ENCODE measurements at regions of chr17 and their contacts with region 1.

Region 1: GRCh38 chr17:39769974-39770587 is 32.3 kb downstream of the GRB7 start:
- DNase-seq: peak; percentile 86
- H3K4me3 Mint-ChIP-seq: no peak overlapping the region
- H3K27ac Mint-ChIP-seq: peak overlapping the region; percentile 86
- H3K4me1 Mint-ChIP-seq: peaks cover 88% of the 10 kb centered on the region
- H3K27me3 Mint-ChIP-seq: no peaks in the 10 kb centered on the region

Region 2: DNA sequence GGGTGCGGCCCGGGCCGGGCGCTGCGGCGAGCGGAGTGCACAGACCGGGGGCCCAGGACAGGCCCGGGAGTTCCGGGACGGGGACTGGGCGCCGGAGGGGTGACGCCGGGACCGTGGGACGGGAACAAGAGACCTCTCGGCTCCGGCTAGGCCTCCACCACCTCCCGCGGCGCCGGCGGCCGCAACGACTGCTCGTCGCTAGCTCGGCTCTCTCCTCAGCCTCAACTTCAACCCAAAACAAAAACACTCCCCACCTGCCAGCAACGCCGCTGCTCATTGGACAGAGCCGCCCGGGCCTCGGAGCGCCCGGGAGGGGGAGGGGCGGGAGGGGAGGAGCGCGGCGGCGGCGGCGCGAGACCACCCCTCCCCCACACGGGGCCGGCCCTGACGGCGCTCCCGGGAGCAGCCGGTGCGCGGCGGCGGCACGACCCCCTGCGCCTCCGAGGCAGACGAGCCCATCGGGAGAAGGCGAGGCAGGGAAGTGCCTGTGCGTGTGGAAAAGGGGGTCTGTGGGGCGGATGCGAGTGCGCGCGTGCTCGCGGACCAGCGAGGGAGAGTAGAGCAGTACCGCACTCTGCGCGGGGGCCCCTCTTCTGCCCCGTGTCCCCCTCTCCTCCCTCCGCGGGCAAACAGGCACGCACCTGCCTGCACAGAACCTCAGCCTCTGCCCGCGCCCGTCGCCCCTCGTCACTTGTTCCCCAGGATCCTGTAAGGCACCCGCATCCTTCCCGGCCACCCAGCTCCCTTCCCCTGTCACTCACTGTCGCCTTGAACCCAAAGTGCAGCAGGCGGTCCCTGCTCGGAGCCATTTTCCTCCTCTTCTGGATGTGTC is 368.5 kb before region 1 on chr17 and contains the start of gene FBXL20:
- CTCF ChIA-PET with region 1: no interaction called
- intact Hi-C with region 1: loop called (anchors 5 kb)
- DNase-seq: peak; percentile 96
- H3K4me3 Mint-ChIP-seq: peak within 1 kb of the TSS; percentile 91
- H3K27ac Mint-ChIP-seq: peak within 1 kb of the TSS; percentile 90
- H3K4me1 Mint-ChIP-seq: peaks cover 61% of the 10 kb centered on the region
- H3K27me3 Mint-ChIP-seq: no peaks in the 10 kb centered on the region
- total RNA-seq, gene FBXL20: 14.2 to 15.4 TPM

Region 3: DNA sequence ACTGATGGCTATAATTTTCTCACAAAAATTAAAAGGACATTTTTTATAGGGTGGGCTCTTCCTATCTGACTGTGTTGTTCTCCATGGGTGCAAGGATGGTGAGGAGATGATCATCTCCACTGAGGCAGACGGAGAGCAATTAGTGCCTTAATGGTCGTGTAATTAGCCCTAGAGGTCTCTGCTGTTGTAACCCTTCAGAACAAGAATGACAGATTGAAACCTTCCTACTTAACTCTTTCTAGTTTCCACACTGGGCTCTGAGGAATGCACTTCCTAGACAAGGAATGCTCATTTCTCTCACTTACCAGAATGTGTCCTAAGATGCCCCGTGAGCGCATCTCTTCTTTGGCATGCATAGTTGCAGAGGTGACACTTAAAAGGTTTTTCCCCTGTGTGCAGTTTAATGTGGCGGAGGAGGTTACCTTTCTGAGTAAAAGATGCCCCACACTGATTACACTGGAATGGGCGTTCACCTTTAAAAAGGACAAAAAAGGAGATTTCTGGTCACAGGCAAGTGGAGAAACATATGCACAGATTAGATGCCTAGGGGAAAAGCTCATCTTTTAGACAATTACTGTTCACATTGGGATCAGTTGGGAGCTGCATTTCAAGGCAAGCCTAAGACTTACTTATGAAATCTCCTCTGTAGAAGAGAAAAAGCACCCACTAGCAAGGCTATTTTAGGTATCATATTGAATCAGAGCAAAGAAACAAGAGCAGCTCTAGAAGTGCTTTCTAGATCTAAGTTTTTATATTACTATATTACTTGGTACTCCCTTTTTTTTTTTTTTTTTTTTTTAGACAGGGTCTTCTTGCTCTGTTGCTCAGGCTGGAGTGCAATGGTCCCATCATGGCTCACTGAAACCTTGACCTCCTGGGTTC is 21.3 kb after region 1 on chr17:
- CTCF ChIA-PET with region 1: interaction called, 7 read pairs
- intact Hi-C with region 1: loop called (anchors 1 kb)
- DNase-seq: peak; percentile 75
- H3K4me3 Mint-ChIP-seq: no peak overlapping the region
- H3K27ac Mint-ChIP-seq: peak overlapping the region; percentile 86
- H3K4me1 Mint-ChIP-seq: peaks cover 57% of the 10 kb centered on the region
- H3K27me3 Mint-ChIP-seq: no peaks in the 10 kb centered on the region

Region 4: GRCh38 chr17:39927101-39927928 is 157.2 kb after region 1 on chr17 and contains the starts of genes LRRC3C and ORMDL3:
- CTCF ChIA-PET with region 1: no interaction called
- intact Hi-C with region 1: loop called (anchors 2 kb)
- DNase-seq: peak; percentile 94
- H3K4me3 Mint-ChIP-seq: peak within 1 kb of the TSS; percentile 98
- H3K27ac Mint-ChIP-seq: peak within 1 kb of the TSS; percentile 94
- H3K4me1 Mint-ChIP-seq: peaks cover 56% of the 10 kb centered on the region
- H3K27me3 Mint-ChIP-seq: no peaks in the 10 kb centered on the region
- total RNA-seq, gene LRRC3C: not detected
- total RNA-seq, gene ORMDL3: 51.8 to 52.1 TPM

Region 5: DNA sequence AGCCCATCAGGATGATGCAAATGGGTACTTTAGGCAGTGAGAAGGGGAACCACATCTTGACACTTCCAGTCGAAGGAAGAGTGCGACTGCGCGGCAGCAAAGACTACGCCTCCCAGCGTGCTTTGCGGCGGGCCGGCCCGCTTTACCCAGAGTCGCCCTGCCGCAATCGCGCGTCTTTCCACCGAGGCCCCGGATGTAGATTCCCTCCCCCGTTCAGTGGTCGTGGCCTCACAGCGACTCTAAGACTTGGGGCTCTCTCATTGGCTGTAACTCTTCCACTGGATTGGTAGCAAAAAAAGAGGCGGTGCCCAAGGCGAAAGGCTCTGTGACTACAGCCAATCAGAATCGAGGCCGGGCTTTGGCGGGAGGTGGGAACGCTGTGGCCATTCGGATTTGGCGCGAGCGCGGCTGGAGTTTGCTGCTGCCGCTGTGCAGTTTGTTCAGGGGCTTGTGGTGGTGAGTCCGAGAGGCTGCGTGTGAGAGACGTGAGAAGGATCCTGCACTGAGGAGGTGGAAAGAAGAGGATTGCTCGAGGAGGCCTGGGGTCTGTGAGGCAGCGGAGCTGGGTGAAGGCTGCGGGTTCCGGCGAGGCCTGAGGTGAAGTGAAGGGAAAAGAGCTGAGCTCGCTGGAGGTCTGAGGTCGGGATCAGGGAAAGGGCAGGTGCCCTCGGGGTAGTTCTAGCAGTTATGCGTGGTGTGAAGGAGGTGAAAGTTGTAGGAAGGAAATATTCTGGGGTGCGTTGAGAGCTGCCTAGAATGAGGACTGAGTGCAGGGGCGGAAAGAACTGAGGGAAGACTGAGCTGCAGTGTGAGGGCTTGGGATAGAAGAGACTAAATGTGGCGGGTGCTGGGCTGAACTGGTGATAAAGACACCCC is 517.7 kb after region 1 on chr17 and contains the start of gene CDC6:
- CTCF ChIA-PET with region 1: no interaction called
- intact Hi-C with region 1: loop called (anchors 10 kb)
- DNase-seq: peak; percentile 100
- H3K4me3 Mint-ChIP-seq: peak within 1 kb of the TSS; percentile 99
- H3K27ac Mint-ChIP-seq: peak within 1 kb of the TSS; percentile 94
- H3K4me1 Mint-ChIP-seq: peaks cover 47% of the 10 kb centered on the region
- H3K27me3 Mint-ChIP-seq: no peaks in the 10 kb centered on the region
- total RNA-seq, gene CDC6: 86.5 to 90.4 TPM

Measured in activated naive CD4-positive, alpha-beta T cell treated with anti-CD3 and anti-CD28 coated beads for 36 hours (primary cell).